B cell (primary cell): ENCODE measurements at regions of chr9 and their contacts with region 1.

Region 1: DNA sequence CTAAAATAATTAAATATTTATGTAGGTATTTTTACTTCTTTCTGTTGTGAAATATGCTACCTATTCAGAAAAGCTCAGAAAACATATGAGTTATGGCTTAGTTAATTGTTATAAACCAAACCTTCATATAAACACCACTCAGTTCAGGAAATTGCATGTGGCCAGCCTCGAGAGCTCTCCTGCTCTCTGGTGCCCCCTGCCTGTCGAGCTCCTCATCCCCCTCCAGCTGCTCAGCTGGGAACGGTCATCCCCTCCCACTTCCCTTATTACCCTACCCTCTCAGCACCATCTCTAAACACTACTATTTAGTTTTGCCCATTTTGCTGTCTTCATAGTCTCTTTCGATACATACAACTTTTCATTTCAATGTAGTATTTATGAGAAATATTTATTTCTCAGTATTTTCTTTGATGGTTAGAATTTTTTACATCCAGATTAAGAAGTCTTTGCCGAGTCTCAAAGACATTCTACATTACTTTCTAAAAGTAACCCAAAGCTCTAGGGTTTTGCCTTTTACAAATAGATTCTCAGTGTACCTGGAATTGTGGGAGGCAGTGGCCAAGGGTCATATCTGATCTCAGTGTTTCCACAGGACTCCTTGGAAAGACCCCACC is 51.2 kb upstream of the SEMA4D start:
- DNase-seq: peak; percentile 89
- ATAC-seq: peak; percentile 100
- H3K4me3 ChIP-seq: no peak overlapping the region
- H3K4me3 Mint-ChIP-seq: no peak overlapping the region
- H3K27ac ChIP-seq: no peak overlapping the region
- H3K27ac Mint-ChIP-seq: peak overlapping the region; percentile 37
- H3K4me1 ChIP-seq: peaks cover 0 to 4% of the 10 kb centered on the region in 2 donors
- H3K4me1 Mint-ChIP-seq: peaks cover 6% of the 10 kb centered on the region
- H3K27me3 ChIP-seq: no peaks in the 10 kb centered on the region
- H3K27me3 Mint-ChIP-seq: no peaks in the 10 kb centered on the region
- CTCF ChIP-seq: peak; percentile 98

Region 2: GRCh38 chr9:88596376-88596775 is 952.8 kb before region 1 on chr9:
- CTCF ChIA-PET with region 1: no interaction called
- POLR2A ChIA-PET with region 1: no interaction called
- intact Hi-C with region 1: no loop called
- DNase-seq: no peak
- ATAC-seq: no peak
- H3K4me3 ChIP-seq: no peak overlapping the region
- H3K4me3 Mint-ChIP-seq: peak overlapping the region; percentile 19
- H3K27ac ChIP-seq: no peak overlapping the region
- H3K27ac Mint-ChIP-seq: no peak overlapping the region
- H3K4me1 ChIP-seq: peaks cover 9 to 13% of the 10 kb centered on the region in 2 donors
- H3K4me1 Mint-ChIP-seq: peaks cover 11% of the 10 kb centered on the region
- H3K27me3 ChIP-seq: peaks cover 0 to 2% (median 0%) of the 10 kb centered on the region in 4 experiments
- H3K27me3 Mint-ChIP-seq: peaks cover 19% of the 10 kb centered on the region
- CTCF ChIP-seq: no peak

Region 3: DNA sequence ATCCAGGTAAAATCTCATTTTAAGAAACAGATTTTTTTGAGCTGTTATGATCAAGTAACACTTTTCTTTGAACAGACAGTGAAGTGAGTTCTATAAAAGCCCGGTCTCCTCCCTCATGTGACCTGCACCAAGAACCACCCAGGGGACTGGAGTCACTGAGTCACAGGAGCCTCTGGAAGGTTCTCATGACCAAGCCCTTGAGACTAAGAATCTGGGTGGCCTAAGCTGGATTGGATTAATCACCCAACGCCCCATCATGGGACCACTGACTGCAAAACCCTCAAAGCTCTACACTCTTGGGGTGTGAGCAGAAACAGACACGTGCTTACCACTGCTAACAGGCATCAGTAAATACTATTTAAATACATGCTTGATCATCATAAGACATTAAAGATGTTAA is 182.4 kb before region 1 on chr9:
- CTCF ChIA-PET with region 1: interaction called, 13 read pairs
- POLR2A ChIA-PET with region 1: no interaction called
- intact Hi-C with region 1: no loop called
- DNase-seq: no peak
- ATAC-seq: no peak
- H3K4me3 ChIP-seq: no peak overlapping the region
- H3K4me3 Mint-ChIP-seq: no peak overlapping the region
- H3K27ac ChIP-seq: no peak overlapping the region
- H3K27ac Mint-ChIP-seq: no peak overlapping the region
- H3K4me1 ChIP-seq: no peaks in the 10 kb centered on the region
- H3K4me1 Mint-ChIP-seq: no peaks in the 10 kb centered on the region
- H3K27me3 ChIP-seq: no peaks in the 10 kb centered on the region
- H3K27me3 Mint-ChIP-seq: no peaks in the 10 kb centered on the region
- CTCF ChIP-seq: no peak

Region 4: DNA sequence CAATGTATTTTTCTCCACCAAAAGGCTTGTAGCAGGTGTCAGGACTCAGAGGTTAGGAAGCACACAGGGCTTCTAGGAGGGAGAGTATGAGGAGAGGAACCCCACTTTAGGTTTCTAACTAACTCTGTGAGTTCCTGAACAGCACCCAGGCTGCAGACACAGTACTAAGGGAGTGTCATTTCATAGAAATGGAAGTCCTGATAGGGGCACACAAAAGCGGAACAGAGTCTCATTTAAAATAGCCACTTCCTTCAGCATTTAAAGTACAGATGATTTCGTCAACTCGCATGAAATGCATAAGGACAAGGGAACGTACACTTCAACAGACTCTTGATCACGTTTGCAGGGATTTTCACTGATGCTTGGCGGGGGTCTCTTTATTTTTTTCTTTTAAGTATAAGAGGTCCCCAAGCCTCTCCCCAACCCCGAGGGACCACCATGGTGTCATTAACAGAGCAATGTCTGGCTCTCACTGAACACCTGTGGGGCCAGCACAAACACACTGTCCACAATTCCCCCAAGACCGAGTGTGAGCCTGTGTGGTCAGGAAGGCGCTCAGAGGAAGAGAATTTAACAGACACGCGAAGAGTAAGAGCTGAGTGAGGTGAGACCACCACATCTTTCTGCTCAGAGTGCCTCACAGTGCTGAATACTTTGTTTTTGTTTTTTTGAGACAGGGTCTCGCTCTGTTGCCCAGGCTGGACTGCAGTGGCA is 148.6 kb before region 1 on chr9:
- CTCF ChIA-PET with region 1: interaction called, 72 read pairs
- POLR2A ChIA-PET with region 1: interaction called, 3 read pairs
- intact Hi-C with region 1: loop called (anchors 1 kb)
- DNase-seq: peak; percentile 78
- ATAC-seq: peak; percentile 83
- H3K4me3 ChIP-seq: peak overlapping the region in 4 of 5 experiments; percentile 21 to 44 (median 36)
- H3K4me3 Mint-ChIP-seq: peak overlapping the region; percentile 78
- H3K27ac ChIP-seq: peak overlapping the region; percentile 69 to 76
- H3K27ac Mint-ChIP-seq: peak overlapping the region; percentile 93
- H3K4me1 ChIP-seq: peaks cover 43 to 56% of the 10 kb centered on the region in 2 donors
- H3K4me1 Mint-ChIP-seq: peaks cover 56% of the 10 kb centered on the region
- H3K27me3 ChIP-seq: no peaks in the 10 kb centered on the region
- H3K27me3 Mint-ChIP-seq: no peaks in the 10 kb centered on the region
- CTCF ChIP-seq: no peak

Region 5: GRCh38 chr9:89437000-89437631 is 112.0 kb before region 1 on chr9:
- CTCF ChIA-PET with region 1: interaction called, 155 read pairs
- POLR2A ChIA-PET with region 1: interaction called, 4 read pairs
- intact Hi-C with region 1: no loop called
- DNase-seq: peak; percentile 67
- ATAC-seq: peak; percentile 83
- H3K4me3 ChIP-seq: no peak overlapping the region
- H3K4me3 Mint-ChIP-seq: peak overlapping the region; percentile 37
- H3K27ac ChIP-seq: peak overlapping the region in 1 of 2 donors; percentile 23
- H3K27ac Mint-ChIP-seq: peak overlapping the region; percentile 78
- H3K4me1 ChIP-seq: peaks cover 78 to 96% of the 10 kb centered on the region in 2 donors
- H3K4me1 Mint-ChIP-seq: peaks cover 87% of the 10 kb centered on the region
- H3K27me3 ChIP-seq: no peaks in the 10 kb centered on the region
- H3K27me3 Mint-ChIP-seq: no peaks in the 10 kb centered on the region
- CTCF ChIP-seq: no peak

Region 6: GRCh38 chr9:89483592-89484522 is 65.3 kb before region 1 on chr9:
- CTCF ChIA-PET with region 1: interaction called, 45 read pairs
- POLR2A ChIA-PET with region 1: interaction called, 6 read pairs
- intact Hi-C with region 1: loop called (anchors 1 kb)
- DNase-seq: peak; percentile 73
- ATAC-seq: peak; percentile 76
- H3K4me3 ChIP-seq: peak overlapping the region; percentile 39 to 86 (median 58)
- H3K4me3 Mint-ChIP-seq: peak overlapping the region; percentile 91
- H3K27ac ChIP-seq: peak overlapping the region; percentile 48 to 84
- H3K27ac Mint-ChIP-seq: peak overlapping the region; percentile 93
- H3K4me1 ChIP-seq: peaks cover 47 to 50% of the 10 kb centered on the region in 2 donors
- H3K4me1 Mint-ChIP-seq: peaks cover 81% of the 10 kb centered on the region
- H3K27me3 ChIP-seq: no peaks in the 10 kb centered on the region
- H3K27me3 Mint-ChIP-seq: no peaks in the 10 kb centered on the region
- CTCF ChIP-seq: no peak

Region 7: GRCh38 chr9:89536145-89536574 is 13.0 kb before region 1 on chr9:
- CTCF ChIA-PET with region 1: interaction called, 44 read pairs
- POLR2A ChIA-PET with region 1: no interaction called
- intact Hi-C with region 1: no loop called
- DNase-seq: no peak
- ATAC-seq: peak; percentile 17
- H3K4me3 ChIP-seq: peak overlapping the region in 1 of 5 experiments; percentile 12
- H3K4me3 Mint-ChIP-seq: peak overlapping the region; percentile 70
- H3K27ac ChIP-seq: no peak overlapping the region
- H3K27ac Mint-ChIP-seq: peak overlapping the region; percentile 68
- H3K4me1 ChIP-seq: peaks cover 23 to 30% of the 10 kb centered on the region in 2 donors
- H3K4me1 Mint-ChIP-seq: peaks cover 27% of the 10 kb centered on the region
- H3K27me3 ChIP-seq: no peaks in the 10 kb centered on the region
- H3K27me3 Mint-ChIP-seq: no peaks in the 10 kb centered on the region
- CTCF ChIP-seq: no peak

Region 8: GRCh38 chr9:89675058-89675742 is 126.1 kb after region 1 on chr9:
- CTCF ChIA-PET with region 1: no interaction called
- POLR2A ChIA-PET with region 1: no interaction called
- intact Hi-C with region 1: no loop called
- DNase-seq: no peak
- ATAC-seq: no peak
- H3K4me3 ChIP-seq: no peak overlapping the region
- H3K4me3 Mint-ChIP-seq: no peak overlapping the region
- H3K27ac ChIP-seq: no peak overlapping the region
- H3K27ac Mint-ChIP-seq: no peak overlapping the region
- H3K4me1 ChIP-seq: no peaks in the 10 kb centered on the region
- H3K4me1 Mint-ChIP-seq: no peaks in the 10 kb centered on the region
- H3K27me3 ChIP-seq: no peaks in the 10 kb centered on the region
- H3K27me3 Mint-ChIP-seq: peaks cover 6% of the 10 kb centered on the region
- CTCF ChIP-seq: no peak